CD4-positive, alpha-beta memory T cell (primary cell): ENCODE measurements at regions of chr12 and their contacts with region 1.

Region 1: DNA sequence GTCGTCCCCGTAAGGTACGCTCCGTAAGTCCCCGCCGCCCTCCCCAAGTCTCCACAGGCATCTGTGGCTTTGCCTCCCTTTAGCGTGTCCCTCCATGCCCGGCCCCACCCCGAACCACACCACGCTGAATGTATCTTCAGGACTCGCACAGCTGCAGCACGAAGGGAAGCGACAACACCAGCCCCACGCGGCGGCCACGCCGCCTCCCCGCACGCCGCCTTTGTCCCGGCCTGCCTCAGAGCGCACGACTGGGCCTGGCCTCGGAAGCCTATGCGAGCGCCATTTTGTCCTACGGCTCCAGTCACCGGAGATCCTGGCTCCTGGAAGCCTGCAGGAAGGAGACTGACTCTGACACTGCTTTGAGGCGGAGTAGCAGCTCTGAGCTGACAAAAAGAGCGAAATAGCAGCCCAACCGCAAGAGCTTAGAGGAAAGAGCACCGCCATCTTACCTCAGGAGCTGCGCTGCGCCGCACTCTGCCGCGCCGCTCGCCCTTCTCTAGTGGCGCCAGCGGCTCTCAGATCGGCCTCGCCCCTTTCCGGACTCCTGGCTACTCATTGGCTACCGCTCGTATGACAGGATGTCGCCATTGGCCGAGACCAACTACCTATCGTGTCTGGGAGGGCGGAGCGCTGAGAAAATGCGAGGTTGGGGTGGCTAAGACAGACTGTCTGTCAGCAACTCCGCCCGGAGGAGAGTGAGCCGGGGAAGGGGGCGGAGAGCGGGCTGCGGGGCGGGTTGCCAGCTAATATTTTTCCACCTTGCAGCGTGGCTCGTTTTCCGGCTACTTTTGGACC is at the start of gene KANSL2:
- DNase-seq: peak; percentile 94 to 100 (median 97)
- H3K4me3 ChIP-seq: peak within 1 kb of the TSS; percentile 80 to 96
- H3K4me3 Mint-ChIP-seq: peak within 1 kb of the TSS; percentile 89 to 98 (median 97)
- H3K27ac ChIP-seq: peak within 1 kb of the TSS; percentile 85
- H3K27ac Mint-ChIP-seq: peak within 1 kb of the TSS; percentile 95 to 99 (median 99)
- H3K4me1 ChIP-seq: peaks cover 43% of the 10 kb centered on the region
- H3K4me1 Mint-ChIP-seq: peaks cover 36 to 60% (median 47%) of the 10 kb centered on the region in 4 donors
- H3K27me3 ChIP-seq: no peaks in the 10 kb centered on the region
- H3K27me3 Mint-ChIP-seq: no peaks in the 10 kb centered on the region
- total RNA-seq, gene KANSL2: 64.4 to 66.8 TPM

Region 2: DNA sequence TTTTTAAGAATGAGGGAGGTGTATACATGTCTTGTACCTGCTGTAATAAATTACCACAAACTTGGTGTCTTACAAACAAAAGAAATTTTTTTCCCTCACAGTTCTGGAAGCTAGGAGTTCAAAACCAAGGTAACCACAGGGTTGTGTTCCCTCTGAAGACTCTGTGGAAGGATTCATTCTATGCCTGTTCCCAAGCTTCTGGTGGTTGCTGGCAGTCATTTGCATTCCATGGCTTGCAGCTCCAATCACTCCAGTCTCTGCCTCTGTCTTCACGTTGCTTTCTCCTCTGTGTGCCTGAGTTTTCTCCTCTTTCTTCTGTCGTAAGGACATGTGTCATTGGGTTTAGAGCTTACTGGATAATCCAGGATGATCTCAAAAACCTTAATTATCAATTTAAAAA is 315.8 kb before region 1 on chr12:
- CTCF ChIA-PET with region 1: no interaction called
- POLR2A ChIA-PET with region 1: no interaction called
- intact Hi-C with region 1: no loop called
- DNase-seq: no peak
- H3K4me3 ChIP-seq: no peak overlapping the region
- H3K4me3 Mint-ChIP-seq: no peak overlapping the region
- H3K27ac ChIP-seq: no peak overlapping the region
- H3K27ac Mint-ChIP-seq: no peak overlapping the region
- H3K4me1 ChIP-seq: no peaks in the 10 kb centered on the region
- H3K4me1 Mint-ChIP-seq: no peaks in the 10 kb centered on the region
- H3K27me3 ChIP-seq: peaks cover 9% of the 10 kb centered on the region
- H3K27me3 Mint-ChIP-seq: peaks cover 0 to 6% of the 10 kb centered on the region in 2 donors

Region 3: GRCh38 chr12:48671231-48671856 is 10.6 kb before region 1 on chr12:
- CTCF ChIA-PET with region 1: interaction called, 3 read pairs
- POLR2A ChIA-PET with region 1: interaction called, 16 read pairs
- intact Hi-C with region 1: no loop called
- DNase-seq: no peak
- H3K4me3 ChIP-seq: no peak overlapping the region
- H3K4me3 Mint-ChIP-seq: no peak overlapping the region
- H3K27ac ChIP-seq: no peak overlapping the region
- H3K27ac Mint-ChIP-seq: no peak overlapping the region
- H3K4me1 ChIP-seq: peaks cover 10% of the 10 kb centered on the region
- H3K4me1 Mint-ChIP-seq: peaks cover 7 to 19% (median 14%) of the 10 kb centered on the region in 4 donors
- H3K27me3 ChIP-seq: no peaks in the 10 kb centered on the region
- H3K27me3 Mint-ChIP-seq: no peaks in the 10 kb centered on the region

Region 4: GRCh38 chr12:48716493-48717251 is 34.7 kb after region 1 on chr12 and contains the start of gene CCNT1:
- CTCF ChIA-PET with region 1: interaction called, 3 read pairs
- POLR2A ChIA-PET with region 1: interaction called, 44 read pairs
- intact Hi-C with region 1: loop called (anchors 1 kb)
- DNase-seq: peak; percentile 98 to 100 (median 100)
- H3K4me3 ChIP-seq: peak within 1 kb of the TSS; percentile 87 to 98
- H3K4me3 Mint-ChIP-seq: peak within 1 kb of the TSS; percentile 89 to 99 (median 94)
- H3K27ac ChIP-seq: peak within 1 kb of the TSS; percentile 98
- H3K27ac Mint-ChIP-seq: peak within 1 kb of the TSS; percentile 90 to 100 (median 97)
- H3K4me1 ChIP-seq: peaks cover 40% of the 10 kb centered on the region
- H3K4me1 Mint-ChIP-seq: peaks cover 25 to 51% (median 37%) of the 10 kb centered on the region in 4 donors
- H3K27me3 ChIP-seq: no peaks in the 10 kb centered on the region
- H3K27me3 Mint-ChIP-seq: no peaks in the 10 kb centered on the region
- total RNA-seq, gene CCNT1: 67.0 to 69.5 TPM